ENCODE measurements at regions of chr17 and their contacts with region 1.

Region 1: GRCh38 chr17:8383143-8383822 is at the start of gene RPL26:
- DNase-seq: peak; percentile 89 to 97
- H3K4me3 ChIP-seq: peak within 1 kb of the TSS; percentile 92
- H3K27ac ChIP-seq: peak within 1 kb of the TSS; percentile 94
- H3K4me1 ChIP-seq: peaks cover 33% of the 10 kb centered on the region
- H3K27me3 ChIP-seq: no peaks in the 10 kb centered on the region
- CTCF ChIP-seq: peak; percentile 92
- total RNA-seq, gene RPL26: 2,320 and 2,519 TPM in 2 replicates

Region 2: GRCh38 chr17:8057691-8058114 is 325.6 kb before region 1 on chr17:
- CTCF ChIA-PET with region 1: no interaction called
- POLR2A ChIA-PET with region 1: no interaction called
- intact Hi-C with region 1: loop called (anchors 5 kb)
- DNase-seq: peak; percentile 61 to 63
- H3K4me3 ChIP-seq: no peak overlapping the region; the same call in 1 of the 2 replicates
- H3K27ac ChIP-seq: no peak overlapping the region
- H3K4me1 ChIP-seq: peaks cover 28% of the 10 kb centered on the region
- H3K27me3 ChIP-seq: peaks cover 5% of the 10 kb centered on the region
- CTCF ChIP-seq: peak; percentile 74

Region 3: GRCh38 chr17:8222630-8223356 is 160.5 kb before region 1 on chr17:
- CTCF ChIA-PET with region 1: interaction called, 4 read pairs
- POLR2A ChIA-PET with region 1: interaction called, 14 read pairs
- intact Hi-C with region 1: loop called (anchors 2 kb)
- DNase-seq: peak; percentile 73 to 92
- H3K4me3 ChIP-seq: peak overlapping the region; percentile 80
- H3K27ac ChIP-seq: peak overlapping the region; percentile 87
- H3K4me1 ChIP-seq: peaks cover 11% of the 10 kb centered on the region
- H3K27me3 ChIP-seq: no peaks in the 10 kb centered on the region
- CTCF ChIP-seq: no peak

Region 4: GRCh38 chr17:8288336-8289102 is 94.8 kb before region 1 on chr17 and contains the start of gene RANGRF:
- CTCF ChIA-PET with region 1: no interaction called
- POLR2A ChIA-PET with region 1: no interaction called
- intact Hi-C with region 1: no loop called
- DNase-seq: peak; percentile 49 to 86
- H3K4me3 ChIP-seq: peak within 1 kb of the TSS; percentile 88
- H3K27ac ChIP-seq: no peak within 1 kb of the TSS
- H3K4me1 ChIP-seq: peaks cover 5% of the 10 kb centered on the region; the same call in 1 of the 2 replicates
- H3K27me3 ChIP-seq: no peaks in the 10 kb centered on the region
- CTCF ChIP-seq: no peak
- total RNA-seq, gene RANGRF: 35.0 and 45.5 TPM in 2 replicates

Region 5: GRCh38 chr17:8397203-8398045 is 14.1 kb after region 1 on chr17 and contains the start of gene RNF222:
- CTCF ChIA-PET with region 1: interaction called, 6 read pairs
- POLR2A ChIA-PET with region 1: interaction called, 6 read pairs
- intact Hi-C with region 1: loop called (anchors 1 kb)
- DNase-seq: peak; percentile 78 to 85
- H3K4me3 ChIP-seq: peak within 1 kb of the TSS; percentile 46; the same call in 1 of the 2 replicates
- H3K27ac ChIP-seq: no peak within 1 kb of the TSS
- H3K4me1 ChIP-seq: peaks cover 24% of the 10 kb centered on the region
- H3K27me3 ChIP-seq: no peaks in the 10 kb centered on the region
- CTCF ChIP-seq: no peak
- total RNA-seq, gene RNF222: 0.45 and 0.79 TPM in 2 replicates

Region 6: GRCh38 chr17:8451933-8452614 is 68.8 kb after region 1 on chr17:
- CTCF ChIA-PET with region 1: interaction called, 21 read pairs
- POLR2A ChIA-PET with region 1: no interaction called
- intact Hi-C with region 1: loop called (anchors 5 kb)
- DNase-seq: no peak
- H3K4me3 ChIP-seq: no peak overlapping the region
- H3K27ac ChIP-seq: no peak overlapping the region
- H3K4me1 ChIP-seq: no peaks in the 10 kb centered on the region
- H3K27me3 ChIP-seq: no peaks in the 10 kb centered on the region
- CTCF ChIP-seq: no peak

Region 7: DNA sequence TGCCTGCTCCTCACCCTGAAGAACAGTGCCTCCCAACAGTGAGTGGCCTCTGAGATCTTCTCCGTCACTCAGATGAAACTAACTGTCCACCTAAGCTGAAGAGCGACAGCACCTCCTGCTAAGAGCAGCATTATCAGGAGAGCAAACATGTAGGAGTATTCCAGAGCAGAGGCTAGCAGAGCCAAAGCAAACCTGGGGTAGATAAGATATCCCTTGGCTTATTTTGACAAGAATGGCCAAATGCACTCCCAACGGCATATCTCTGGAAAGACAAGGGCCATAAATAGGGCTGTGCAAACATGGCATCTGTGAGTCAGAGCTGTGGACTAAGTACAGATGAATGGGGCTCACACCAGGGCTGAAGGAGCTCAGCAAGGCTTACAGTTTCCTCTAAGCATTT is 148.7 kb after region 1 on chr17:
- CTCF ChIA-PET with region 1: no interaction called
- POLR2A ChIA-PET with region 1: no interaction called
- intact Hi-C with region 1: no loop called
- DNase-seq: no peak
- H3K4me3 ChIP-seq: no peak overlapping the region
- H3K27ac ChIP-seq: no peak overlapping the region
- H3K4me1 ChIP-seq: no peaks in the 10 kb centered on the region
- H3K27me3 ChIP-seq: peaks cover 75% of the 10 kb centered on the region
- CTCF ChIP-seq: no peak

Region 8: GRCh38 chr17:8894673-8895578 is 511.6 kb after region 1 on chr17:
- CTCF ChIA-PET with region 1: no interaction called
- POLR2A ChIA-PET with region 1: no interaction called
- intact Hi-C with region 1: loop called (anchors 1 kb)
- DNase-seq: peak in 1 of 2 experiments; percentile 44
- H3K4me3 ChIP-seq: no peak overlapping the region
- H3K27ac ChIP-seq: no peak overlapping the region
- H3K4me1 ChIP-seq: no peaks in the 10 kb centered on the region
- H3K27me3 ChIP-seq: peaks cover 30% of the 10 kb centered on the region; the same call in 1 of the 2 replicates
- CTCF ChIP-seq: peak; percentile 64